AG04449 (cell line): ENCODE measurements at regions of chr12 and their contacts with region 1.

Region 1: GRCh38 chr12:56189176-56189917 is at the start of gene SMARCC2:
- DNase-seq: no peak
- H3K4me3 ChIP-seq: peak within 1 kb of the TSS; percentile 82
- CTCF ChIP-seq: peak; percentile 87

Region 2: GRCh38 chr12:56117778-56118687 is 71.3 kb before region 1 on chr12 and contains the start of gene ZC3H10:
- CTCF ChIA-PET with region 1: interaction called, 311 read pairs
- POLR2A ChIA-PET with region 1: interaction called, 24 read pairs
- DNase-seq: peak; percentile 95
- H3K4me3 ChIP-seq: peak within 1 kb of the TSS; percentile 94
- CTCF ChIP-seq: peak; percentile 80

Region 3: GRCh38 chr12:56165369-56165768 is 24.0 kb before region 1 on chr12:
- CTCF ChIA-PET with region 1: interaction called, 21 read pairs
- POLR2A ChIA-PET with region 1: interaction called, 15 read pairs
- DNase-seq: no peak
- H3K4me3 ChIP-seq: no peak overlapping the region
- CTCF ChIP-seq: no peak

Region 4: GRCh38 chr12:56206457-56207166 is 17.3 kb after region 1 on chr12:
- CTCF ChIA-PET with region 1: interaction called, 74 read pairs
- POLR2A ChIA-PET with region 1: no interaction called
- DNase-seq: no peak
- H3K4me3 ChIP-seq: no peak overlapping the region
- CTCF ChIP-seq: peak; percentile 71

Region 5: DNA sequence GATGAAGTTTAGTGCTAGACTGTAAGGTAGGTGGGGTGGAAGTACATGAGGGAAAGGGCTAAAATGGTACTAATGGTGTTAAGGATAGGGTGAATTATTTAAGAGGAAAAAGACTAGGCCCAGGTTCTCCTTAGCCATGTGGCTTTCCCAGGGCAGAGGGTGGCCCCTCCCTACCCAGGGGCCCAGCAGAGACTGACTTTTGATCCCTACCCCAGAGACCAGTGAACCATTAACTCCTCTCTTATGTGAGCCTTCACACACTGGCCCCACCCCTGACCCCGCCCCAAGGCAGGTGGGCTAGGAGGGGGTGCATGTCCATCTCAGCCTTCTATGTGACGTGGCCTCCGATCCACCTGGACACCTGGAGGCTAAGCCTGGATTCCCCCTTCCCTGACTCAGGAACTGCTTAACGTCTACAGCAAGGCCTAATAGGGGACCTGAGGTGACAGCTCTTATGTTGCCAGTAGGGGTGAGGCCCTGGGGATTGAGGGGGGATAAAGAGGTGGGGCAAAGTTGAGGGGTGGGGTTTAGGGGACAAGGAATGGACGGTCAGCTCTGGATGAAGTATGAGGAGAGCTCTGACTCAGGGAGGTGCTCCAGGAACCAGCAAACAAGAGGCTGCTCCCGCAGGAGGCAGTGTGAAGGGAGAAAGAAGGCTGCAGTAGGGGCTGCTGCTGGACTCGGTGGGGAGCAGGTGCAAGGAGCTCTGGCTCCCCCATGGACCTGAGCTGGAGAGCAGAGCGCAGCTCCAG is 41.3 kb after region 1 on chr12:
- CTCF ChIA-PET with region 1: interaction called, 58 read pairs
- POLR2A ChIA-PET with region 1: no interaction called
- DNase-seq: no peak
- H3K4me3 ChIP-seq: no peak overlapping the region
- CTCF ChIP-seq: no peak

Region 6: GRCh38 chr12:56461235-56462159 is 272.1 kb after region 1 on chr12:
- CTCF ChIA-PET with region 1: interaction called, 40 read pairs
- POLR2A ChIA-PET with region 1: no interaction called
- DNase-seq: no peak
- H3K4me3 ChIP-seq: no peak overlapping the region
- CTCF ChIP-seq: no peak